Gastrocnemius medialis (tissue), 4 donors: ENCODE measurements at regions of chr2 and their contacts with region 1.

Region 1: DNA sequence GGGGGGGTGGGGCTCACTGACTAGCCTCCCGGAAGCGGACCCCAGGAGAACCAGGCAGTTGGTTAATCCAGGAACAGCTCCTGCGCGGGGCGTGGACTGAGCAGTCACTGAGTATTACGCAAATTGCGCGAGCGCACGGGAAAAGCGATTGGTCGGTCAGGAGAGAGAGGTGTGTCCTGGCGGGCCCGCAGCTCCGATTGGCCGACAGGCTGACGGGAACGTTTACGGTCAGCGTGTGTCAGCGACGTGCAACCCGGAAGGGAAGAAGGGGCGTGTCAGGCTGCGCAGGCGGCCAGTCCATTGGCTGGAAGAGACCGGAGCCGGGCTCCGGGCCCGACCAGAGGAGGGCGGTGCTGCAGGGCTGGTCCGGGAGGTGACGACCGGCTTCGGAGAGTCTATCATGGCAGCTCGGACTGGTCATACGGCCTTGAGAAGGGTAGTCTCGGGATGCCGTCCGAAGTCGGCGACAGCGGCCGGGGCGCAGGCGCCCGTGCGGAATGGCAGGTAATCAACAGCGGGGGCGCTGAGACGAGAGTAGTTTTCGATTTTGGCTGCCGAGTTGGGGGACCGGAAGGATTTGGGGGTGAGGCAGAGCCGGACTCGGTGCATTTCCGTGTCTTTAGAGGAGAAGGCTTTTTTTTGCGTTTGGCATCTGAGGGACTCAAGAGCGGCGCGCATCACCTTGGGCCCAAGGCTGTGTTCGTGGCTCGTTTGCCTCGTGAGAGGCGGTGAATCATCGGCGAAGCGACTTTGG is at the start of gene COQ10B:
- DNase-seq: peak; percentile 100
- ATAC-seq: peak; percentile 91 to 95
- H3K4me3 ChIP-seq: peak within 1 kb of the TSS; percentile 78 to 94 (median 84)
- H3K27ac ChIP-seq: peak within 1 kb of the TSS; percentile 93 to 100 (median 98)
- H3K4me1 ChIP-seq: peaks cover 11 to 19% of the 10 kb centered on the region in 2 donors
- H3K27me3 ChIP-seq: no peaks in the 10 kb centered on the region
- CTCF ChIP-seq: peak in 4 of 5 experiments; percentile 10 to 52 (median 30)
- POLR2A ChIP-seq: peak; percentile 89 to 91
- total RNA-seq, gene COQ10B: 7.4 to 21.5 (median 13.7) TPM

Region 2: DNA sequence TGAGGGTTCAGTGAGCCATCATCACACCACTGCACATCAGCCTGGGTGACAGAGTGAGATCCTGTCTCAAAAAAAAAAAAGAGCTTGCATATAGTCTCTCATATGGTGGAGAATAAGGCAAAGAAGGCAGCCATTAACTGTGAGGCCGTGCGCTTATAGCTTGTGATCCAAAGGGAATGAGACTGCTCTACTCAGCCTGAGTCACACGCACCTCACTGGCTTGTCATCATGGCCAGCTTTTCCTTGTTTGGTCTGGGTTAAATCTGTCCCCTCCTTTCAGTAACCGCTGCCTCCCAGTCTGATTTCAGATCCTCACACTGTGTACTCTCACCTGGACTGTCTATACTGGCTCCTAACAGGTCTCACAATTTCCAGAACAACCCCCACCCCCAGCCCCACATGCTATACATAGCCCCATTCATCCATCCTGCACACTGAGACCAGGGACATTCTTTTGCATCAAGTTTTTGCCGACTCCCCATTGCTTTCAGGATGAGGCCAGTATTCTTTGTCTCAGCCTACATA is 107.4 kb before region 1 on chr2:
- in situ Hi-C with region 1: no loop called
- intact Hi-C with region 1: no loop called
- DNase-seq: peak; percentile 28 to 32
- ATAC-seq: peak; percentile 26 to 75
- H3K4me3 ChIP-seq: no peak overlapping the region
- H3K27ac ChIP-seq: peak overlapping the region in 3 of 4 donors; percentile 30 to 86 (median 82)
- H3K4me1 ChIP-seq: peaks cover 0 to 14% of the 10 kb centered on the region in 2 donors
- H3K27me3 ChIP-seq: no peaks in the 10 kb centered on the region
- CTCF ChIP-seq: no peak
- POLR2A ChIP-seq: no peak

Region 3: DNA sequence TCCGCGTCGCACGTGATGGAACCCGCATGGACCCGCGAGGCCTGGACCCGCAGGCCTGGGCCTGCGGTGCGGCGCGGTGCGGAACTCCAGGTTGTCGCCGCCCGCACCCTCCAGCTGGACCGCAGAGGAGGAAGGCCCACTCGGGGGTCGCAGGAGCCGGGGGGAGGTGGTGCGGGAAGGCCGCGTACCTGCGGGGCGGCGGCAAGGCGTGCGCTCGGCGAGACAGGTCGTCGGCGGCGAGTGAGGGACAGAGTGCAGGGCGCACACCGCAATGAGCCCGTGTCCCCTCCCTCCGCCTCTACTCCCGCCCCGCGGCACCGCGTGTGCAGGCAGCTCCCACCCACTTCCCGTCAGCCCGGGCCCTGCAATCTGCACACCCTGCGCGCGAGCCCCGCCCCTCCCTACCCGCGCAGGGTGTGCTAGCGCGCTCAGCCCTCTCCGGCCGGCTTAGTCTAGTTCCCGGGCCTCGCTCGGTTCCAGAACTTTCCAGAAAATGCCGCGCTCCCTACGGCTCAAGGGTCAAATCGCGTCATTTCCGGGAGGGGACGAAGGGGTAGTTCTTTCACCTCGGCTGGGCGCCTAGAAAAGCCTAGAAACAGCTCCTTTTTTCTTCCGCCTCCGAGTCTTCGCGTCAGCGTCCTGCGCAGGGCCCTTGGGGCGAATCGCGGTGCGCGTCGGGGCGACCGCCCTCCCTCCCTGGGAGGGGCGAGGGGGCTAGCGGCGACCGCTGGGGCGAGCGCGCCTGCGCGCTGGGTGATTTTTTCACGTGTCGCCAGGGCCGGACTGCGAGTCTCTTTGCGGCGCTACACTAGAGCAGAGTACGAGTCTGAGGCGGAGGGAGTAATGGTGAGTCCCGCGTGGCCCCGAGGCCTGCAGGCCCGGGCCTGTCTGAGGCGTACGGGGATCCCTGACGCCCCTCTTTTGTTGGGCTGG is 46.5 kb after region 1 on chr2 and contains the starts of genes HSPD1 and HSPE1:
- in situ Hi-C with region 1: loop called in 1 of 4 experiments (anchors 10 kb)
- intact Hi-C with region 1: loop called (anchors 1 kb)
- DNase-seq: peak; percentile 96
- ATAC-seq: peak; percentile 86 to 91
- H3K4me3 ChIP-seq: peak within 1 kb of the TSS; percentile 81 to 89 (median 84)
- H3K27ac ChIP-seq: peak within 1 kb of the TSS; percentile 96 to 98 (median 97)
- H3K4me1 ChIP-seq: peaks cover 38 to 45% of the 10 kb centered on the region in 2 donors
- H3K27me3 ChIP-seq: no peaks in the 10 kb centered on the region
- CTCF ChIP-seq: peak in 3 of 5 experiments; percentile 25 to 44 (median 26)
- POLR2A ChIP-seq: peak; percentile 95
- total RNA-seq, gene HSPD1: 82.0 to 104 (median 88.2) TPM
- total RNA-seq, gene HSPE1: 43.2 to 122 (median 88.0) TPM

Region 4: GRCh38 chr2:197515739-197516392 is 62.5 kb after region 1 on chr2 and contains the start of gene MOB4:
- in situ Hi-C with region 1: no loop called
- intact Hi-C with region 1: loop called (anchors 1 kb)
- DNase-seq: peak; percentile 95
- ATAC-seq: peak; percentile 93 to 95
- H3K4me3 ChIP-seq: peak within 1 kb of the TSS; percentile 70 to 100 (median 86)
- H3K27ac ChIP-seq: peak within 1 kb of the TSS; percentile 93 to 100 (median 95)
- H3K4me1 ChIP-seq: peaks cover 19 to 26% of the 10 kb centered on the region in 2 donors
- H3K27me3 ChIP-seq: no peaks in the 10 kb centered on the region
- CTCF ChIP-seq: no peak
- POLR2A ChIP-seq: peak; percentile 95 to 97
- total RNA-seq, gene MOB4: 29.3 to 41.3 (median 38.2) TPM